ENCODE measurements at regions of chr11 and their contacts with region 1.

Region 1: GRCh38 chr11:113875234-113876073 is at the start of gene USP28:
- DNase-seq: peak; percentile 92 to 99 (median 97)

Region 2: GRCh38 chr11:114159802-114160632 is 284.6 kb after region 1 on chr11:
- intact Hi-C with region 1: loop called (anchors 10 kb)
- DNase-seq: peak; percentile 78 to 97 (median 89)